ENCODE measurements at regions of chr7 and their contacts with region 1.

Region 1: DNA sequence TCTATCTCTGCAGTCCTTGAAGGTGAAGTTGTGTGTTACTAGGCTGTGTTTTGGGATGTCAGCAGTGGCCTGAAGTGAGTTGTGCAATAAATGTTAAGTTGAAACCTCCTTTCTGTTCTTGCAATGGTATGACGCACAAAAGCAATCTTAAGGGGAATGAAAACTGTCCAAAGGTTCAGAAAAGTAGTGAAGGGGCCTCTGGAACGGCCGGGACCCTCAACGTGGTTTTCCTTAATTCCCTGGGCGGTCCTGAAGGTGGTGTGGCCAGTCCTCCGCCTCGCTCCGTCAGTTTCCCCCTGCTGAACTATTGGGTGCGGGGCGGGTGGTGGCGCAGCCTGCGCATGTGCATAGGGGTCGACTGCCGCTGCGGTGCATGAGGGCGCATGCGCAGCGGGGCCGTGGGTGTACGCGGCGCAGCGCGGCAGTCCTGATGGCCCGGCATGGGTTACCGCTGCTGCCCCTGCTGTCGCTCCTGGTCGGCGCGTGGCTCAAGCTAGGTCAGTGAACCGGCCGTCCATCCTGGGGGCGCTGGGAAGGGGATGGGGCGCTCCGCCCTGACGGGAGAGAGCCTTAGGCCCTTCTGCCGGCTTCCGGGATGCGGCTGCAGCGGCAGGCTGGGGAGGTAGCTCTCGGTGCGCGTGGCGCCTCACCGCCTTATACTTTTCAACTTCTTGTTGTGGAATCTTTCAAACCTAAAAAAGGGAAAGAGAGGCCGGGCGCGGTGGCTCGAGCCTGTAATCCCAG is at the start of gene SUMF2:
- DNase-seq: peak; percentile 81 to 97 (median 89)
- ATAC-seq: peak; percentile 89
- H3K4me3 ChIP-seq: peak within 1 kb of the TSS; percentile 95
- H3K4me3 Mint-ChIP-seq: peak within 1 kb of the TSS; percentile 93
- H3K27ac ChIP-seq: peak within 1 kb of the TSS; percentile 82 to 84
- H3K27ac Mint-ChIP-seq: peak within 1 kb of the TSS; percentile 95
- H3K4me1 ChIP-seq: peaks cover 25% of the 10 kb centered on the region
- H3K4me1 Mint-ChIP-seq: peaks cover 31% of the 10 kb centered on the region
- H3K27me3 ChIP-seq: no peaks in the 10 kb centered on the region
- H3K27me3 Mint-ChIP-seq: no peaks in the 10 kb centered on the region
- CTCF ChIP-seq: no peak
- total RNA-seq, gene SUMF2: 95.8 to 102 TPM

Region 2: DNA sequence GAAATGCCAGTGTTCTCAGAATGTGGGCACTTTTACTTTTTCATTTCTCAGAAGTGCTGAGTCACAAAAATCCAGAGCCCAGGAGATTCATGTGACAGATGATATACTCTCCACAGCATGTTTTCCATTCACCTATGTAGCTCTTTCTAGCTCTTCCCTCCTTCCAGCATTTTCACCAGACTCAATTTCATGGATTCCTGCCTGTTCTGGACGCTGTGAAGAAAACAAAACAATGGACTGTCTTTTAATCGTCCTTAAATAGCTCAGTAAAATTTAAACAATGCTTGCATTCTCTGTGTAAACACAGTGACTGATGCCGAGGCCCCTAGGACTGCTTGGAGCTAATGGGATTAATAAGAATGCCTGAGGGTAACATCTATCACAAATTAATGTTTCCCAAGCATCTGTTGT is 151.3 kb before region 1 on chr7:
- CTCF ChIA-PET with region 1: no interaction called
- POLR2A ChIA-PET with region 1: no interaction called
- intact Hi-C with region 1: no loop called
- DNase-seq: no peak
- ATAC-seq: no peak
- H3K4me3 ChIP-seq: no peak overlapping the region
- H3K4me3 Mint-ChIP-seq: no peak overlapping the region
- H3K27ac ChIP-seq: no peak overlapping the region
- H3K27ac Mint-ChIP-seq: no peak overlapping the region
- H3K4me1 ChIP-seq: no peaks in the 10 kb centered on the region
- H3K4me1 Mint-ChIP-seq: no peaks in the 10 kb centered on the region
- H3K27me3 ChIP-seq: no peaks in the 10 kb centered on the region
- H3K27me3 Mint-ChIP-seq: no peaks in the 10 kb centered on the region
- CTCF ChIP-seq: no peak

Region 3: GRCh38 chr7:56033671-56034432 is 30.2 kb before region 1 on chr7:
- CTCF ChIA-PET with region 1: interaction called, 11 read pairs
- POLR2A ChIA-PET with region 1: interaction called, 21 read pairs
- intact Hi-C with region 1: loop called in 1 of 2 experiments (anchors 5 kb)
- DNase-seq: peak; percentile 52 to 87 (median 70)
- ATAC-seq: peak; percentile 98
- H3K4me3 ChIP-seq: peak overlapping the region; percentile 67
- H3K4me3 Mint-ChIP-seq: peak overlapping the region; percentile 85
- H3K27ac ChIP-seq: peak overlapping the region in 1 of 2 donors; percentile 30
- H3K27ac Mint-ChIP-seq: peak overlapping the region; percentile 36
- H3K4me1 ChIP-seq: peaks cover 12% of the 10 kb centered on the region
- H3K4me1 Mint-ChIP-seq: peaks cover 6% of the 10 kb centered on the region
- H3K27me3 ChIP-seq: no peaks in the 10 kb centered on the region
- H3K27me3 Mint-ChIP-seq: no peaks in the 10 kb centered on the region
- CTCF ChIP-seq: peak; percentile 37

Region 4: GRCh38 chr7:56099653-56100052 is 35.6 kb after region 1 on chr7:
- CTCF ChIA-PET with region 1: no interaction called
- POLR2A ChIA-PET with region 1: interaction called, 42 read pairs
- intact Hi-C with region 1: loop called in 1 of 2 experiments (anchors 5 kb)
- DNase-seq: no peak
- ATAC-seq: no peak
- H3K4me3 ChIP-seq: no peak overlapping the region
- H3K4me3 Mint-ChIP-seq: no peak overlapping the region
- H3K27ac ChIP-seq: no peak overlapping the region
- H3K27ac Mint-ChIP-seq: no peak overlapping the region
- H3K4me1 ChIP-seq: peaks cover 3% of the 10 kb centered on the region
- H3K4me1 Mint-ChIP-seq: peaks cover 5% of the 10 kb centered on the region
- H3K27me3 ChIP-seq: no peaks in the 10 kb centered on the region
- H3K27me3 Mint-ChIP-seq: no peaks in the 10 kb centered on the region
- CTCF ChIP-seq: no peak

Region 5: GRCh38 chr7:56157238-56157790 is 93.3 kb after region 1 on chr7:
- CTCF ChIA-PET with region 1: no interaction called
- POLR2A ChIA-PET with region 1: no interaction called
- intact Hi-C with region 1: no loop called
- DNase-seq: no peak
- ATAC-seq: no peak
- H3K4me3 ChIP-seq: no peak overlapping the region
- H3K4me3 Mint-ChIP-seq: no peak overlapping the region
- H3K27ac ChIP-seq: no peak overlapping the region
- H3K27ac Mint-ChIP-seq: no peak overlapping the region
- H3K4me1 ChIP-seq: no peaks in the 10 kb centered on the region
- H3K4me1 Mint-ChIP-seq: no peaks in the 10 kb centered on the region
- H3K27me3 ChIP-seq: no peaks in the 10 kb centered on the region
- H3K27me3 Mint-ChIP-seq: peaks cover 12% of the 10 kb centered on the region
- CTCF ChIP-seq: no peak

Measured in CD4-positive, alpha-beta T cell (primary cell).